Colonic mucosa (tissue), 4 donors: ENCODE measurements at regions of chrX and their contacts with region 1.

Region 1: GRCh38 chrX:149512225-149512885 is 7.2 kb upstream of the IDS start:
- DNase-seq: peak; percentile 53
- H3K4me3 ChIP-seq: no peak overlapping the region
- H3K27ac ChIP-seq: no peak overlapping the region
- H3K4me1 ChIP-seq: no peaks in the 10 kb centered on the region
- H3K27me3 ChIP-seq: no peaks in the 10 kb centered on the region
- CTCF ChIP-seq: peak; percentile 60

Region 2: GRCh38 chrX:149631234-149632165 is 119.1 kb after region 1 on chrX and contains the start of gene TMEM185A:
- intact Hi-C with region 1: loop called (anchors 10 kb)
- DNase-seq: peak; percentile 80
- H3K4me3 ChIP-seq: peak within 1 kb of the TSS; percentile 73
- H3K27ac ChIP-seq: peak within 1 kb of the TSS; percentile 57
- H3K4me1 ChIP-seq: no peaks in the 10 kb centered on the region
- H3K27me3 ChIP-seq: no peaks in the 10 kb centered on the region
- CTCF ChIP-seq: no peak
- total RNA-seq, gene TMEM185A: 12.5 to 18.8 TPM